HEK293 (cell line): ENCODE measurements at regions of chr1 and their contacts with region 1.

Region 1: DNA sequence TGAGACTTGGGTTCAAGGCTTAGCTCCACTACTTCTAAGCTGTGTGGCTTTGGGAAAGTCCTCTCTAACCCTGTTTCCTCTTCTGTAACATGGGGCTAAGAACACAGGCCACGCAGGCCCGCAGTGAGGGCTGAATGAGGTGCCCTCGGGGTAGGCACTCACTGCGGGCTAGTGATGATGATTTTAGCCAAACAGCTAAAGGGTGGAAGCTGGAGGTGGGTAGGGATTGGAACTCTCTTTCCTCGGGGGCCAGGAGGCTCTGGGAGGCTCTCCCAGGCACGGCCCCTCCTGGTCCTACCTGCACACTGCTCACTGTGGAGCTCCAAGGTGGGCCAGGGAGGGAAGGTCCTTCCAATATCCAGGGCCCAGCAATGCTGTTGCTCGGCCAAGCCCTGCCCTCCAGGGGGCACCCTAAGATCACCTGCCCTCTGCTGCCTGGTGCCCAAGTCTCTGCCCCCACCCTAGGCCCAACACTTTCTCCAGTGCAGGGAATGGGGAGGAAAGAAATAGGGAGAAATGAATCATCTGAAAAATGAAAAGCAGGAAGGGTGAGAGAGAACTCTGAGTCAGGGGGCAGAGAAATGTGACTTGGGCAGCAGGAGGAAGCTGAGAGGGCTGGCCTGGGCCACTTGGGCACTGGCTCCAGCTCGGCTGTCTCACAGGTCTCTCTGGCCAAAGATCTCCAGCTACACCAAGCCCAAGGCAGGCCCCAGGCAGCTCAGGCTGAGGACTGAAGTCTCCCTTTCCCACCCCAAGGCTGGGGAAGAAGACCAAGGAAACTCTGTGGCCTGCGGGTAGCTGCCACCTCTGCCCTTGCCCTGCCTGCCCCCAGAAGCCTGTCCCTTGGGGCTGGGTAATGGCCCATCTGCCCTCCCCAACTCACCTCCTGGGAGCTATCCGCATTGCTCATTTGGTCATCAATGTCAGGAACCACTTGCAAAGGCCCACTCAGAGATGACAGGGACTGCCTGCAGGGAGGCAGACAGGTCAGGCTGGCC is 19.3 kb upstream of the EVA1B start:
- H3K4me3 ChIP-seq: no peak overlapping the region
- H3K27ac ChIP-seq: no peak overlapping the region
- H3K4me1 ChIP-seq: no peaks in the 10 kb centered on the region
- CTCF ChIP-seq: peak; percentile 69; the same call in 1 of the 2 replicates

Region 2: GRCh38 chr1:36420836-36421664 is 78.3 kb after region 1 on chr1:
- CTCF ChIA-PET with region 1: interaction called, 18 read pairs
- POLR2A ChIA-PET with region 1: no interaction called
- H3K4me3 ChIP-seq: no peak overlapping the region
- H3K27ac ChIP-seq: no peak overlapping the region
- H3K4me1 ChIP-seq: no peaks in the 10 kb centered on the region
- CTCF ChIP-seq: peak; percentile 93